Activated naive CD4-positive, alpha-beta T cell treated with anti-CD3 and anti-CD28 coated beads, Interleukin-2, amount 10 ng/mL, durations not matched to agents 7 days and 5 days (primary cell): ENCODE measurements at regions of chr7 and their contacts with region 1.

Region 1: DNA sequence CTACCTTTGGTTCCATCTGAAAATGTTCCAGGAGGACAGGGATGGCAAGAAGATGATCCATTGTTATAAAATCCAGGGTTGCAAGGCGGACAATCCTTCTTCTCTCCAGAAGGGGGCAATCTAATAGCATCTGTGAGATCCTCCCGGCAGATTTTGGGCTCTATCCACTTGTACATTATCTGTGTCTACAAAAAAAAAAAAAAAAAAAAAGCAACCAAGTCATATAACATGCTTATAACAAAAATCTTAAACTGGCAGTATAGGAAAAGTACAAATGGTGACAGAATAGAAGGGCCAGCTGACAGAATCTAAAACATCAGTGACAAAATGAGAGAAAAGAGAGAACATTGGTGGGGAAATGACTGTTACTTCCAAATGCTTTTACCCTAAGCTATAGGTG is 132.7 kb downstream of the ELAPOR2 start:
- DNase-seq: peak; percentile 37
- H3K4me3 Mint-ChIP-seq: no peak overlapping the region
- H3K27ac Mint-ChIP-seq: no peak overlapping the region
- H3K4me1 Mint-ChIP-seq: no peaks in the 10 kb centered on the region
- H3K27me3 Mint-ChIP-seq: peaks cover 4% of the 10 kb centered on the region

Region 2: GRCh38 chr7:86667732-86668131 is 259.0 kb before region 1 on chr7:
- CTCF ChIA-PET with region 1: no interaction called
- DNase-seq: no peak
- H3K4me3 Mint-ChIP-seq: no peak overlapping the region
- H3K27ac Mint-ChIP-seq: no peak overlapping the region
- H3K4me1 Mint-ChIP-seq: no peaks in the 10 kb centered on the region
- H3K27me3 Mint-ChIP-seq: no peaks in the 10 kb centered on the region

Region 3: GRCh38 chr7:86833360-86833759 is 93.4 kb before region 1 on chr7:
- CTCF ChIA-PET with region 1: no interaction called
- DNase-seq: no peak
- H3K4me3 Mint-ChIP-seq: no peak overlapping the region
- H3K27ac Mint-ChIP-seq: no peak overlapping the region
- H3K4me1 Mint-ChIP-seq: no peaks in the 10 kb centered on the region
- H3K27me3 Mint-ChIP-seq: no peaks in the 10 kb centered on the region

Region 4: DNA sequence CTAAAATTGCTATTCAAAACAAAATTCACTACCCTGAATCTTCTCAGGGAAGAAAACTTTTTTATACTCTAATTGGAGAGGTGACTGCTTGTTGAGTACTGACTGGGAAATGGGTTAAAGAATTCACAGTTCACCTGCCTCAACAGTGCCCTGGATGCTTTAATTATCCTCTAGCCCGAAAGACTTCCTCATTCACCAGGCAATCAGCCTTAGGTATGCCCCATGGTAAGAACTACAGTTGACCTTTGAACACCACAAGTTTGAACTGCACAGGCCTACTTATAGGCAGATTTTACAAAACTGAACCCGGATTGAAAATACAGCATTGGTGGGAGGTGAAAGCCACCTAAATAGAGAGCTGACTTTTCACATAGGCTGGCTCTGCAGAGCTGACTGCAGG is 42.6 kb before region 1 on chr7:
- CTCF ChIA-PET with region 1: no interaction called
- DNase-seq: no peak
- H3K4me3 Mint-ChIP-seq: no peak overlapping the region
- H3K27ac Mint-ChIP-seq: no peak overlapping the region
- H3K4me1 Mint-ChIP-seq: no peaks in the 10 kb centered on the region
- H3K27me3 Mint-ChIP-seq: no peaks in the 10 kb centered on the region

Region 5: DNA sequence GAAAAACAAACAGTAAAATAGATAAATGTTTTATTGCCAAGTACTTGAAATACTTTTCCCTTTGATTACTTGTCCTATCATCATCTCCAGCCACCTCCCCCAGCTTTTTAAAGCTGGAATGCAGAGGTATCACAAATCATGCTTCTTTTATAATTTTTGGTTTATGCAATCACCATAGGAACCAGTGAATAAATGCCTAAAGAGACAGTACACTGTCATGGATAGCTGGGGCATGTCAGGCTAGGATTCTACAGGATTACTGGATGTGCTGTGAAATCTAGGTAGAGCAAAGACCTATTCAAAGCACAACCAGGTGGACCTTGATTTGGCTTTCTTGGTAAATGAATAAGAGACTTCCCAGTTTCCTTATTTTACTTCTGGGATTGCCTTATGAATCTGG is 25.8 kb before region 1 on chr7:
- CTCF ChIA-PET with region 1: no interaction called
- DNase-seq: no peak
- H3K4me3 Mint-ChIP-seq: no peak overlapping the region
- H3K27ac Mint-ChIP-seq: no peak overlapping the region
- H3K4me1 Mint-ChIP-seq: no peaks in the 10 kb centered on the region
- H3K27me3 Mint-ChIP-seq: no peaks in the 10 kb centered on the region

Region 6: DNA sequence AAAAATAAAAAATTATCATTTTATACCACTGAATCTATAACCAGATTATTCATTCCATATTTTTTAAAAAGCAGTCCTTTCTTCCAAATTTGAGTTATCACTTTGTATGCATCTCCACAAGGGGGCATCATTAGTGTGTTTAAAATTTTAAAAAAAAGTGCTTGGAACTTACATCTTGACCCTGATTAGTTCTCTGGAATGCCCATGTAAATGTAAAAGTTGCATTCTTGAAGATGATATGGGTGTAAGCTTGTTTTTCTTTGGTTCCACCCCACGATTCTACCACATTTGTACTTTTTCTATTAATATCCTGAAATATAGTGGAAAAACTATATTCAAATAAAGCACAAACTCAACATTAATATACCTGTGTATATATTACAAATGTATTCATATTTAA is 12.2 kb before region 1 on chr7:
- CTCF ChIA-PET with region 1: interaction called, 10 read pairs
- DNase-seq: no peak
- H3K4me3 Mint-ChIP-seq: no peak overlapping the region
- H3K27ac Mint-ChIP-seq: no peak overlapping the region
- H3K4me1 Mint-ChIP-seq: no peaks in the 10 kb centered on the region
- H3K27me3 Mint-ChIP-seq: no peaks in the 10 kb centered on the region

Region 7: DNA sequence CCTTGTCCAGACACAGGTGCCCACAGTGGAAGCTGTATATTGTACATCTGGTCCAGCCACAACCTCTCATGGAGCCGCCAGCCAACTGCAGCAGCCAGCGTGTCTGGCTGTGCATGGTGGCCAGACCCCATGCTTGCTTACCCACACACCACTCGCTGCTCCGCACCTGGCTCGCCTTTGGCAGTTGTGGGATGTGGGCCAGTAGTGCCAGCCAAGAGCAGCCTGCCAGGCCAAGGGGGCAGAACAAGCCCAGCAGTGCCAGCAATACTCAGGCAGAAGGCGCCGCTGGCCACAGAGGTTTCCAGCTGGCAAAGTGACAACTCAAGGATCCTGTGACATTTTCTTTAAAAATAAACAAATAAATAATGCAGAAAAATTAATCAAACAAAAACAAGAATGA is 304.5 kb after region 1 on chr7:
- CTCF ChIA-PET with region 1: interaction called, 15 read pairs
- DNase-seq: no peak
- H3K4me3 Mint-ChIP-seq: no peak overlapping the region
- H3K27ac Mint-ChIP-seq: no peak overlapping the region
- H3K4me1 Mint-ChIP-seq: peaks cover 5% of the 10 kb centered on the region
- H3K27me3 Mint-ChIP-seq: peaks cover 21% of the 10 kb centered on the region